ENCODE measurements at regions of chr9 and their contacts with region 1.

Region 1: DNA sequence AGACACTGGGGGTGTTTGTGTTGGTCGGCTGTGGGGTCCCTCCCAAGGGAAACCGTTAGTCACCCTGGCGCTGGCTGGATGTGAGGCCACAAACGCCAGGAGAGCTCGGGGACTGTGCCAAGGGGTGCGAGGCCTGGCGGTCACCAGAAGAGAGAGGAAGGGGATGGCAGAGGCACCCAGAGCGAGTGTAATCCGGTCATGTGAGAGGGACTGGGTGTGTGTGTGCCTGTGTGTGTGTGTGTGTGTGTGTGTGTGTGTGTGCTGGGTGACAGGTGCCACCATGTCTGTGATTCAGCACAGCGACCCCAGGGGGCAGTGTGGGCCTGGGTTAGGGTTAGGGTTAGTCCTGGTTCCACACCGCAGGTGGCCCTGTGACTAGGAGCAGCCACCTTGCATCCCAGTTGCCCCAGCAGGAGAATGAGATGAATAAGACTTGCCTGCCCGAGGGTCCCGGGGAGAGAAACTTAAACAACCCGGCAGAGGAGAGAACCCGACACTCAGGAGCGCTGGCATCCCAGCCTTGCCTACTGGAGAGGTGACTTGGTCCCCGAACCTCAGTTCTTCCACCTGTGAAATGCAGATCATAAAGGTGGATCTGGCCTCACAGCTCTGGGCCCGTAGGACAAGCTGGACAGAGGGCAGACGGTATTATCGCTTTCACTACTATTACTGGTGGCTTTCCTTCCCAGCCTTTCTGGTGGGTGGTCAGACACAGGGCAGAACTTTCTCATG is 1.4 kb upstream of the ADAMTSL2 start:
- DNase-seq: peak; percentile 54
- H3K4me3 Mint-ChIP-seq: no peak overlapping the region
- H3K27ac Mint-ChIP-seq: no peak overlapping the region
- H3K4me1 Mint-ChIP-seq: no peaks in the 10 kb centered on the region
- H3K27me3 Mint-ChIP-seq: peaks cover 57% of the 10 kb centered on the region
- CTCF ChIP-seq: peak; percentile 39

Region 2: DNA sequence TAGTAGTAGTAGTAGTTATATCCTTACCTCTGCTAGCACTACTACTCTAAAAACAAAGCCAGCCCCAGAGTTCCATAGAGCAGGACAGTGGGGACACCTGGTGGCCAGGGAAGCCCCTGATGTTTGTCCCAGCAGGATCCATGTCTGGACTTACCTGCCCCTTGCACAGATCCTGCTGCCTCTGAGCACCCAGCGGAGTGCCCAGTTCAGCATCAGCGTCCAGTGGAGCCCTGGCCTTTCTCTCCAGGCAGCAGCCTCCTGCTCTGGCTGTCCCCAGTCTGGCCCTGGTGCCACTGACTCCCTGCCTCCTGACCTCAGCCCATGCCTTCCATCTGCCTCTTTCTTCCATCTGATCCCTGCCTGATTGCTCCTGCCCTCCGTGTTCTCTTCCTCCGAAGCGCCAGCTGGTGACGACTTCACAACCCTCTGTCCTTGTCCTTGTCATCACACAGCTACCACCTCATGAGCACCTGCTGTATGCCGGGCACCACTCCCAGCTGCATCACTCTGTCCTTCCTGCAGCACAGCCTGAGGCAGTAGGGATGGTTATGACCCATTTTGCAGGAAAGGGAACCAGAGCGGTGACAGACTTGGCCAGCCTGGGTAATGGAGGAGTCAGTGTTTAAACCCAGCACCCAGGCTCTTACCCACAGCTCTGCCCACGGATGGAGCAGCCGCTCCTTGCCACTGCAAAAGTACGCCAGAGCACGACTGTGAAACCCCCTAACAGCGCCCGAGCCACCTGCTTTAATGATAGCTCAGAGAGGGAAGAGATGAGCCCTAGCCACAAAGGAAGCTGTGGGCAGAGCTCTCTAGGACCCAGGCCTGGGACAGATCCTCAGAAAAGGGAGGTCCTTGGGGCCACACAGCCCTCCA is 193.5 kb after region 1 on chr9:
- CTCF ChIA-PET with region 1: interaction called, 3 read pairs
- POLR2A ChIA-PET with region 1: no interaction called
- intact Hi-C with region 1: loop called (anchors 1 kb)
- DNase-seq: peak; percentile 61
- H3K4me3 Mint-ChIP-seq: no peak overlapping the region
- H3K27ac Mint-ChIP-seq: no peak overlapping the region
- H3K4me1 Mint-ChIP-seq: no peaks in the 10 kb centered on the region
- H3K27me3 Mint-ChIP-seq: peaks cover 88% of the 10 kb centered on the region
- CTCF ChIP-seq: peak; percentile 37

Measured in MCF 10A (cell line).